ENCODE measurements at regions of chr7 and their contacts with region 1.

Region 1: GRCh38 chr7:93043385-93043985 is 74.3 kb downstream of the SAMD9 start:
- DNase-seq: no peak
- ATAC-seq: no peak
- H3K4me3 ChIP-seq: no peak overlapping the region
- H3K27ac ChIP-seq: no peak overlapping the region
- H3K4me1 ChIP-seq: peaks cover 21 to 22% of the 10 kb centered on the region in 2 experiments
- H3K27me3 ChIP-seq: no peaks in the 10 kb centered on the region
- CTCF ChIP-seq: no peak
- EP300 ChIP-seq: no peak
- POLR2A ChIP-seq: no peak
- RAD21 ChIP-seq: no peak

Region 2: GRCh38 chr7:92944633-92945032 is 98.9 kb before region 1 on chr7:
- CTCF ChIA-PET with region 1: no interaction called
- POLR2A ChIA-PET with region 1: no interaction called
- in situ Hi-C with region 1: no loop called
- intact Hi-C with region 1: loop called (anchors 5 kb)
- DNase-seq: no peak
- ATAC-seq: no peak
- H3K4me3 ChIP-seq: no peak overlapping the region
- H3K27ac ChIP-seq: no peak overlapping the region
- H3K4me1 ChIP-seq: no peaks in the 10 kb centered on the region
- H3K27me3 ChIP-seq: no peaks in the 10 kb centered on the region
- CTCF ChIP-seq: no peak
- EP300 ChIP-seq: no peak
- POLR2A ChIP-seq: no peak
- RAD21 ChIP-seq: no peak

Region 3: DNA sequence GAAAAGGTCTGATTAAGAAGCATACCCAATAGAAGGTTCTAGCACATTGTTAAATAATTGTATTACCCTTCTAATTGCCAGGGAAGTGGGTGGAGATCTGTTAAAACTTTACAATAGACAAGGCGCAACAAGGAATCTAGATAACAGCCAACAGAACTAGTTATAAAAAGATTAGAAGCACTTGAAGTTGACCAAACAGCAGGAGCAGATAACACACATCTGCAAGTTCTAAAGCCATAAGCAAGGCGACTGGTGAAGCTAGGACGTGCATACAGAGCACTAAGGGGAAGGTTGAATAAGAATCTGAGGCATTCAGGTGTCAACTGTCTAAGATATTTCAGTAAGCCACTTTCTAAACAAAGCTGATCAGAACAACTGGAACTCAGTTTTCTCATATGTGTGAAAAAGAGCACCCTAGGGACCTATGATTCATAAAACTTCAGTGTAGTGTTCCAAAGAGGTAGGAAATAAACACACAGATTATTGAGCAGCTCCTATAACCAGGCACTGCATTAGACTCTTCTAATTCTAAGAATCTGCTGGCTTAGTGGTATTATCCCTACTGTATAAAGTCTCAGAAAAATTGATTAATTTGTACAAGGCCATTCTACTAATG is 36.9 kb before region 1 on chr7:
- CTCF ChIA-PET with region 1: no interaction called
- POLR2A ChIA-PET with region 1: no interaction called
- in situ Hi-C with region 1: no loop called
- intact Hi-C with region 1: loop called (anchors 5 kb)
- DNase-seq: peak in 2 of 4 experiments; percentile 34 to 75
- ATAC-seq: peak; percentile 58
- H3K4me3 ChIP-seq: no peak overlapping the region
- H3K27ac ChIP-seq: peak overlapping the region; percentile 57; the same call in 1 of the 3 replicates
- H3K4me1 ChIP-seq: peaks cover 14 to 35% of the 10 kb centered on the region in 2 experiments; a peak in 4 of 5 replicates
- H3K27me3 ChIP-seq: no peaks in the 10 kb centered on the region
- CTCF ChIP-seq: no peak
- EP300 ChIP-seq: peak; percentile 17; the same call in 1 of the 2 replicates
- POLR2A ChIP-seq: no peak
- RAD21 ChIP-seq: no peak

Region 4: GRCh38 chr7:93030605-93031225 is 12.8 kb before region 1 on chr7:
- CTCF ChIA-PET with region 1: no interaction called
- POLR2A ChIA-PET with region 1: no interaction called
- in situ Hi-C with region 1: no loop called
- intact Hi-C with region 1: no loop called
- DNase-seq: no peak
- ATAC-seq: no peak
- H3K4me3 ChIP-seq: no peak overlapping the region
- H3K27ac ChIP-seq: no peak overlapping the region
- H3K4me1 ChIP-seq: peaks cover 5% of the 10 kb centered on the region in 2 experiments; a peak in 3 of 5 replicates
- H3K27me3 ChIP-seq: no peaks in the 10 kb centered on the region
- CTCF ChIP-seq: no peak
- EP300 ChIP-seq: no peak
- POLR2A ChIP-seq: no peak
- RAD21 ChIP-seq: no peak

Region 5: DNA sequence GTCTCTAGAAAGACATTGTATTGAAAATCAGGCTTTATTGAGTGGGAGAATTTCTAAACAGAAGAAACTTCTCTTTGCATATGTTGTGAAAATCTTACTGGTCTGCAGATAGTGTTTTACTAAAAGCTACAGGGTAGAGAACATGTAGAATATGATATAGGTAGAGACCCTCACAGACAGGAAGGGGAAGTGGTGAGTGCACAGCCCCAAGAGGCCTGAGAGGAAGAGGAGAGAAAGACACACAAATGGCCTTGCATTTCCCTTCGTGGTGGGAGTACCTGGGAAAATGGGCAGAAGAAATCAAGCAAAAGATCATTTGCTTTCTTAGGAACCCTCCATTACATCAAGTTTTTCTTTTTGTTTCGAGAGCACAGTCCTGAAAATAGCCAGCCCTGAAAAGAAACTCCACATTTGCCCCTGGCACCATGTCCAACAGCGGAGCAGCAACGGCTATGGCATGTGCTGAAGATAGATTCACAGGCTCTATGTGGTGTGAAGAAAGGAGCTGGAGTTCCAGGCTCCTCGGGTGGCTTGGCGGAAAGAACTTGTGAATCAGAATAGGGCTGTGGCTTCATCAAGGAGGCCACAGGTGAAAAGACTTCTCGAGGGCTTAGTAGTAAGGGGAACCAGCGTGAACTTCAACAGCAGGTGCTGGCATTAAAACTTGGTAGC is 387.6 kb after region 1 on chr7:
- CTCF ChIA-PET with region 1: no interaction called
- POLR2A ChIA-PET with region 1: no interaction called
- in situ Hi-C with region 1: no loop called
- intact Hi-C with region 1: no loop called
- DNase-seq: no peak
- ATAC-seq: no peak
- H3K4me3 ChIP-seq: no peak overlapping the region
- H3K27ac ChIP-seq: no peak overlapping the region
- H3K4me1 ChIP-seq: no peaks in the 10 kb centered on the region
- H3K27me3 ChIP-seq: peaks cover 4 to 8% of the 10 kb centered on the region in 2 experiments; a peak in 2 of 5 replicates
- CTCF ChIP-seq: no peak
- EP300 ChIP-seq: no peak
- POLR2A ChIP-seq: no peak
- RAD21 ChIP-seq: no peak